Uterus (tissue), 4 donors: ENCODE measurements at regions of chr19 and their contacts with region 1.

Region 1: DNA sequence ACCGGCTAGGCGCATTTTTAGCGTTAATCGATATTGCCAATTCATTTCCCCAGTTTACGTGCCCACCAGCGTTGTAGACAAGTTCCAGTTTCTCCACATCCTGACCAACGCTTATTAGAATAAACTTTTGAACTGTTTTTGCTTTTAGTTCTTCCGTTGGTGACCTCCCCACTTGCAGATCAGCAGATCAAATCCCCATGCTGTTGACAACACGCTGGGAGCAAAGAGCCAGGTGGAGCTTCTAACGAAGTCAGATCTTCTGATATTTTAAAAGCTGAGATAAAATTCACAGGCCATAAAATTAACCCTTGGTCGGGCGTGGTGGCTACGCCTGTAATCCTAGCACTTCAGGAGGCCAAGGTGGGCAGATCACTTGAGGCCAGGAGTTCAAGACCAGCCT is 21.2 kb downstream of the RCN3 start:
- DNase-seq: no peak
- H3K4me3 ChIP-seq: no peak overlapping the region
- H3K27ac ChIP-seq: no peak overlapping the region
- H3K4me1 ChIP-seq: no peaks in the 10 kb centered on the region
- H3K27me3 ChIP-seq: no peaks in the 10 kb centered on the region
- CTCF ChIP-seq: no peak
- POLR2A ChIP-seq: no peak

Region 2: GRCh38 chr19:49502866-49503581 is 46.0 kb before region 1 on chr19:
- intact Hi-C with region 1: loop called (anchors 2 kb)
- DNase-seq: peak; percentile 56 to 64
- H3K4me3 ChIP-seq: no peak overlapping the region
- H3K27ac ChIP-seq: peak overlapping the region; percentile 18 to 65
- H3K4me1 ChIP-seq: peaks cover 2 to 5% of the 10 kb centered on the region in 2 donors
- H3K27me3 ChIP-seq: no peaks in the 10 kb centered on the region
- CTCF ChIP-seq: peak; percentile 70 to 86 (median 78)
- POLR2A ChIP-seq: no peak

Region 3: GRCh38 chr19:49624967-49625910 is 76.2 kb after region 1 on chr19:
- intact Hi-C with region 1: no loop called
- DNase-seq: no peak
- H3K4me3 ChIP-seq: no peak overlapping the region
- H3K27ac ChIP-seq: no peak overlapping the region
- H3K4me1 ChIP-seq: no peaks in the 10 kb centered on the region
- H3K27me3 ChIP-seq: no peaks in the 10 kb centered on the region
- CTCF ChIP-seq: no peak
- POLR2A ChIP-seq: no peak

Region 4: GRCh38 chr19:49766007-49766937 is 217.2 kb after region 1 on chr19:
- intact Hi-C with region 1: no loop called
- DNase-seq: peak; percentile 99 to 100
- H3K4me3 ChIP-seq: peak overlapping the region; percentile 93 to 96
- H3K27ac ChIP-seq: peak overlapping the region; percentile 90 to 93
- H3K4me1 ChIP-seq: peaks cover 0 to 17% of the 10 kb centered on the region in 2 donors
- H3K27me3 ChIP-seq: no peaks in the 10 kb centered on the region
- CTCF ChIP-seq: peak in 1 of 4 experiments; percentile 30
- POLR2A ChIP-seq: peak; percentile 86 to 94